GM10248 (cell line): ENCODE measurements at regions of chr12 and their contacts with region 1.

Region 1: DNA sequence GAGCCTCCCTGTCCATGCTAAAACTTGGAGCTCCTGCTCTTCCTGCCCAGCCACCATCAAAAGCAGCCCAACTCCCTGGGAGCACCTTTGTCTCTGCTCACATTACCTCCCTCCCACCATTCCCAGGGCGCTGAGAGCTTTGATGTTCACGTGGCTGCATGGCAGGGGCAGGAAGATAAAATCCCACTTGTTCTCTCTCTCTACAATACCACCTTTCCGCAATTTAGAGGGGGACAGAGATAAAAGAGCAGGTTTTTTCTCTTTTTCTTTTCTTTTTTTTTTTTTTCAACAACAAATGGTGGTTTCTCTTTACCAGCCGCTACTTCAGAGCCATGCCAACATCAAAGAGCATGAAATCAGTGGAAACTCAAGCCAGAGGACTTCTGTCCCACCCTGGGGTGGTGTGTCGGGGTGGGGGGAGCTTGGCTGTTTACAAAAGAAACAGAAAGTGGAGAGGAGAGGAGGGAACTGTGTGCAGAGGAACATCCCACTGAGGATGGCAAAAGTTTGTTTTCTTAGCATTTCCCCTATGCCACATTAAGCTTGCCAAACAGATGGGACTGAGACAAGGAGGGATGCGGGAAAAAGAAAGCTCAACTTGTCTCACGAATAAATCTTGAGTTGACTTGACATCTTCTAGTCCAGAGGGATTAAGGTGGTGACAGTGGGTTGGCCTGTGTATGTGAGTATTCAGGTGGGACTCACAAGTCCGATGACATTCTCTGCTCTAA is 103.7 kb upstream of the NUDT4 start:
- DNase-seq: no peak
- CTCF ChIP-seq: no peak

Region 2: DNA sequence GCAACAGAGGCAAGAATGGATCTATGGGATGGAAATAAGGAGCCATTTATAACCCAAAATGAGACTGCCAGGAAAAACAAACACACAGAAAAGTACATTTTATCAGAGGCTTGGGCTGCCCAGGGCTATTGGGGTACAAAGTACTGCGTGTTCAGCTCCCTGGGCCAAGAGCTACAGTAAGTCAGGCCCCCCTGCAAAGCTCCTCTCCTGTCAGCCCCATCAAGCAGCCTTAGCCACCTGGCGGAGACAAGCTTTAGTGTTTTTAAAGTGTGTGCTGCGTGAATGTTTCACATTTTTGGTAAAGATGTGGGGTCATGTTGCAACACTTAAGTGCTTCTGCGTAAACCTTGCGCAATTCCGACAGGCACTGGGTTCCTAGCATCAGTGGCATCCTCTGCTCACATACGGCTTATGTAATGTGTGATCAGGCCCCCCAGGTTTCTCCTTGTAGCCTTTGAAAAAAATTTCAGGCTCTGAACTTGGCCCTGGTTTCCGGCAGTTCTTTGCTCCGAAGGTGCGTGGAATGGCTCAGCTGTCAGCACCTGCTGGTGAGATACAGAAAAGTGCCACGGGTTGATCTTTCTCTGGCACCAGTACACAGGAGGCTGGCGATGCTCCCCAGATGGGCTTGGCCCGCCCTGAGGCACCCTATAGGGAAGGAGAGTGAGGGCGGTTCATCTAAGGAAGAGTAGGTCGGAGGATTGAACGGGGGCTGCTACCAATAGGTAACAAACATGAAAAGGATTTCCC is 146.2 kb before region 1 on chr12:
- CTCF ChIA-PET with region 1: no interaction called
- POLR2A ChIA-PET with region 1: no interaction called
- DNase-seq: no peak
- CTCF ChIP-seq: no peak

Region 3: GRCh38 chr12:93261505-93262094 is 12.4 kb before region 1 on chr12:
- CTCF ChIA-PET with region 1: interaction called, 11 read pairs
- POLR2A ChIA-PET with region 1: no interaction called
- DNase-seq: no peak
- CTCF ChIP-seq: no peak

Region 4: DNA sequence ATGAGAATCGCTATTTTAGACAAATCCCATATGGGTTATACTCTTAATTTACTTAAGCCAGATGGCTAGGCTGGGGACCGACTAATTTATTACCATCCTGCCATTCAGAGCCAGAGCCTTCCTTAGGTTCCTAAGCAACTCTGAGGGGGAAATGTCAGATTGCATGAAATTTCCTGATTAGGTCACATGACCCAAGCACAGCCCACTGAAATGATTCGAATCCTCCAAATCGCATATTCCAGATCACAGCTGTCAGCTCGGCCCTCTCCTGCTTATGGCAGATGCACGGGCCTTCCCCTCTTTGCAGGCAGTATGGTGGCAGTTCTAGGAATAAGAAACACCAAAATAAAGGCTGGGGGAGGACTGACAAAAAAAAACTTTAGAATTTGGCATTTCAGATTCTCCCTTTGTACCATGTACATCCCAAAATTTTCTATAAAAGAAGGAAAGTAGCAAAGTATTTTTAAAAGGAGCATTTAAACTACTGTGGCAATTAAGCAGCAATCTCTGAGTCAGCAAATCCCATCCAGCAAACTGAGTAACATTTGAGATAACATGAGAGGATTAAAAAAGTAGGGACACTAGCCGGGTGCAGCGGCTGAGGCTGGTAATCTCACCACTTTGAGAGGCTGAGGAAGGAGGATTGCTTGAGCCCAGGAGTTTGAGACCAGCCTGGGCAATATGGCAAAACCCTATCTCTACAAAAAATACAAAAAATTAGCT is 73.2 kb after region 1 on chr12:
- CTCF ChIA-PET with region 1: no interaction called
- POLR2A ChIA-PET with region 1: no interaction called
- DNase-seq: no peak
- CTCF ChIP-seq: no peak